ENCODE measurements at regions of chr7 and their contacts with region 1.

Region 1: DNA sequence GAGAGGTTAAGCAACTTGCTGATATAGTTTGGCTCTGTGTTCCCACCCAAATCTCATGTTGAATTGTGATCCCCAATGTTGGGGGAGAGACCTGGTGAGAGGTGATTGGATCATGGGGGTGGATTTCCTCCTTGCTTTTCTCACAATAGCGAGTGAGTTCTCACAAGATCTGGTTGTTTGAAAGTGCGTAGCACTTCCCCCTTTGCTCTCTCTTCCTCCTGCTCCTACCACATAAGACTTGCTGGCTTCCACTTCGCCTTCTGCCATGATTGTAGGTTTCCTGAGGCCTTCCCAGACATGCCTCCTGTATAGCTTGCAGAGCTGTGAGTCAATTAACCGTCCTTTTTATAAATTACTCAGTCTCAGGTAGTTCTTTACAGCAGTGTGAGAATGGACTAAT is 13.5 kb upstream of the ZNRF2 start:
- DNase-seq: no peak
- ATAC-seq: no peak
- H3K4me3 ChIP-seq: no peak overlapping the region
- H3K4me3 Mint-ChIP-seq: no peak overlapping the region
- H3K27ac ChIP-seq: no peak overlapping the region
- H3K27ac Mint-ChIP-seq: no peak overlapping the region
- H3K4me1 ChIP-seq: no peaks in the 10 kb centered on the region
- H3K4me1 Mint-ChIP-seq: no peaks in the 10 kb centered on the region
- H3K27me3 ChIP-seq: no peaks in the 10 kb centered on the region
- H3K27me3 Mint-ChIP-seq: no peaks in the 10 kb centered on the region
- CTCF ChIP-seq: no peak

Region 2: GRCh38 chr7:29471444-29472138 is 799.3 kb before region 1 on chr7:
- CTCF ChIA-PET with region 1: no interaction called
- POLR2A ChIA-PET with region 1: no interaction called
- intact Hi-C with region 1: no loop called
- DNase-seq: no peak
- ATAC-seq: no peak
- H3K4me3 ChIP-seq: no peak overlapping the region
- H3K4me3 Mint-ChIP-seq: no peak overlapping the region
- H3K27ac ChIP-seq: no peak overlapping the region
- H3K27ac Mint-ChIP-seq: no peak overlapping the region
- H3K4me1 ChIP-seq: no peaks in the 10 kb centered on the region
- H3K4me1 Mint-ChIP-seq: no peaks in the 10 kb centered on the region
- H3K27me3 ChIP-seq: no peaks in the 10 kb centered on the region
- H3K27me3 Mint-ChIP-seq: no peaks in the 10 kb centered on the region
- CTCF ChIP-seq: no peak

Region 3: DNA sequence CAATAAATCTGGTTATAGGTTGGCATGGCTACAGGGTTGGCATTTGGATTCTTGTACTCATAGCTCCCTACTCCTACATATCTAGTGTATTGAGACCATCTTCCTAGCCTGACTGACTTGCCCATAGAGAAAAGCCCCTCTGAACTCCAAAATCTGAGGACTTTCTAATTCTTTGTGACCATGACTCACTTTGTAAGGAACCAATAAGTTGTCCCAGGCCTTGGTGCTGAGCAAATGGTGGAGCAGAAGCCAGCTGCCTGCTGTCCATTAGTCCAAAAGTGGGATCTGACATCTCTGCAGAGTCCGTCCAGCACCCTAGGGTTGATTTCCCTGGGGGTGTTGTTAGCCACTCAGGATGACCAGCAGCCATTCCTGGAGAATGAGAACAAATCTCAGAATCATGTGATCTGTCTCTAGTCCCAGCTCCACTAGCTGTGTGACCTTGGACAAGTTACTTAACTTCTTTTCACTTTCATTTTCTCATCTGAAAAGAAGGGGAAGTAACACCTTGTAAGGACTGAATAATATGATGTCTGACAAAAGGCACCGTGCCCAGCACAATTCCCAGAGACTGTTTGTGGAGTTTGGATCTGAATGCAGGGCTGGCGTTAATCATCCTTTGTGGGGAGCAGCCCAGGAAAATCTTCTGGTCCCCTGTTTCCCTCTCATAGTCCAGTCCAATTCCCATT is 92.0 kb before region 1 on chr7:
- CTCF ChIA-PET with region 1: no interaction called
- POLR2A ChIA-PET with region 1: no interaction called
- intact Hi-C with region 1: loop called in 1 of 2 experiments (anchors 5 kb)
- DNase-seq: peak in 3 of 14 experiments; percentile 19 to 46 (median 31)
- ATAC-seq: no peak
- H3K4me3 ChIP-seq: no peak overlapping the region
- H3K4me3 Mint-ChIP-seq: no peak overlapping the region
- H3K27ac ChIP-seq: no peak overlapping the region
- H3K27ac Mint-ChIP-seq: no peak overlapping the region
- H3K4me1 ChIP-seq: peaks cover 8% of the 10 kb centered on the region
- H3K4me1 Mint-ChIP-seq: no peaks in the 10 kb centered on the region
- H3K27me3 ChIP-seq: no peaks in the 10 kb centered on the region
- H3K27me3 Mint-ChIP-seq: no peaks in the 10 kb centered on the region
- CTCF ChIP-seq: no peak

Region 4: GRCh38 chr7:30469303-30469702 is 198.4 kb after region 1 on chr7:
- CTCF ChIA-PET with region 1: no interaction called
- POLR2A ChIA-PET with region 1: no interaction called
- intact Hi-C with region 1: loop called in 1 of 2 experiments (anchors 5 kb)
- DNase-seq: no peak
- ATAC-seq: no peak
- H3K4me3 ChIP-seq: no peak overlapping the region
- H3K4me3 Mint-ChIP-seq: no peak overlapping the region
- H3K27ac ChIP-seq: no peak overlapping the region
- H3K27ac Mint-ChIP-seq: no peak overlapping the region
- H3K4me1 ChIP-seq: peaks cover 49% of the 10 kb centered on the region
- H3K4me1 Mint-ChIP-seq: peaks cover 82% of the 10 kb centered on the region
- H3K27me3 ChIP-seq: no peaks in the 10 kb centered on the region
- H3K27me3 Mint-ChIP-seq: no peaks in the 10 kb centered on the region
- CTCF ChIP-seq: no peak